Mammary epithelial cell (primary cell): ENCODE measurements at regions of chr1 and their contacts with region 1.

Region 1: GRCh38 chr1:98323906-98324358 is 337.6 kb upstream of the SNX7 start:
- DNase-seq: peak; percentile 89
- H3K4me3 ChIP-seq: no peak overlapping the region
- H3K27ac ChIP-seq: peak overlapping the region; percentile 97
- H3K4me1 ChIP-seq: peaks cover 53% of the 10 kb centered on the region
- H3K27me3 ChIP-seq: no peaks in the 10 kb centered on the region
- CTCF ChIP-seq: no peak

Region 2: GRCh38 chr1:98048244-98048643 is 275.7 kb before region 1 on chr1:
- CTCF ChIA-PET with region 1: interaction called, 9 read pairs
- dilution Hi-C with region 1: no loop called
- in situ Hi-C with region 1: no loop called
- intact Hi-C with region 1: loop called (anchors 2 kb)
- DNase-seq: peak; percentile 82
- H3K4me3 ChIP-seq: peak overlapping the region; percentile 22 to 32 (median 27)
- H3K27ac ChIP-seq: no peak overlapping the region
- H3K4me1 ChIP-seq: peaks cover 13% of the 10 kb centered on the region
- H3K27me3 ChIP-seq: no peaks in the 10 kb centered on the region
- CTCF ChIP-seq: no peak

Region 3: GRCh38 chr1:98287626-98288025 is 36.3 kb before region 1 on chr1:
- CTCF ChIA-PET with region 1: no interaction called
- dilution Hi-C with region 1: no loop called
- in situ Hi-C with region 1: no loop called
- intact Hi-C with region 1: loop called (anchors 2 kb)
- DNase-seq: peak; percentile 28
- H3K4me3 ChIP-seq: peak overlapping the region in 1 of 3 experiments; percentile 24
- H3K27ac ChIP-seq: no peak overlapping the region
- H3K4me1 ChIP-seq: no peaks in the 10 kb centered on the region
- H3K27me3 ChIP-seq: no peaks in the 10 kb centered on the region
- CTCF ChIP-seq: no peak

Region 4: GRCh38 chr1:98388441-98388840 is 64.5 kb after region 1 on chr1:
- CTCF ChIA-PET with region 1: no interaction called
- dilution Hi-C with region 1: no loop called
- in situ Hi-C with region 1: no loop called
- intact Hi-C with region 1: loop called (anchors 2 kb)
- DNase-seq: peak; percentile 88
- H3K4me3 ChIP-seq: no peak overlapping the region
- H3K27ac ChIP-seq: peak overlapping the region; percentile 75
- H3K4me1 ChIP-seq: peaks cover 47% of the 10 kb centered on the region
- H3K27me3 ChIP-seq: no peaks in the 10 kb centered on the region
- CTCF ChIP-seq: no peak

Region 5: GRCh38 chr1:98496246-98496995 is 172.5 kb after region 1 on chr1:
- CTCF ChIA-PET with region 1: no interaction called
- dilution Hi-C with region 1: no loop called
- in situ Hi-C with region 1: no loop called
- intact Hi-C with region 1: no loop called
- DNase-seq: peak; percentile 61
- H3K4me3 ChIP-seq: no peak overlapping the region
- H3K27ac ChIP-seq: peak overlapping the region; percentile 7
- H3K4me1 ChIP-seq: peaks cover 8% of the 10 kb centered on the region
- H3K27me3 ChIP-seq: no peaks in the 10 kb centered on the region
- CTCF ChIP-seq: no peak